Breast epithelium (tissue), 4 donors: ENCODE measurements at regions of chr9 and their contacts with region 1.

Region 1: GRCh38 chr9:12212860-12213259 is 480.3 kb upstream of the TYRP1 start:
- DNase-seq: no peak
- H3K4me3 ChIP-seq: no peak overlapping the region
- H3K27ac ChIP-seq: no peak overlapping the region
- H3K4me1 ChIP-seq: no peaks in the 10 kb centered on the region
- H3K27me3 ChIP-seq: no peaks in the 10 kb centered on the region
- CTCF ChIP-seq: no peak
- POLR2A ChIP-seq: no peak

Region 2: DNA sequence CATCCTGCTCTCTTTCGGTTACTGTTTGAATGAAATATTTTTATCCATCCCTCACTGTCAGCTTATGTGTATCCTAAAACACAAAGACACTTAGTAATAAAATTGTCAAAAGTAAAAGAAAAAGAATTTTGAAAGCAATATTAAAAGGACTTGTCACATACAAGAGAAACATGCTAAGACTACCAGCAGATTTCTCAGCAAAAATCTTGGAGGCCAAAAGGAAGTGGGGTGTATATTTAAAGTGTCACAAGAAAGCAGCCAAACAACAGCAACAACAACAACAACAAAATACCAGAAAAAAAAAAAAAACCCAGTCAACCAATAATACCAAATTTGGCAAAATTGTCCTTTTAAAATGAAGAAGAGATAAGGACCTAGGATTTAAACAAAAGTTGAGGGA is 198.4 kb before region 1 on chr9:
- intact Hi-C with region 1: loop called (anchors 10 kb)
- DNase-seq: no peak
- H3K4me3 ChIP-seq: no peak overlapping the region
- H3K27ac ChIP-seq: no peak overlapping the region
- H3K4me1 ChIP-seq: no peaks in the 10 kb centered on the region
- H3K27me3 ChIP-seq: no peaks in the 10 kb centered on the region
- CTCF ChIP-seq: no peak
- POLR2A ChIP-seq: no peak